ENCODE measurements at regions of chr2 and their contacts with region 1.

Region 1: GRCh38 chr2:43226558-43226954 is at the start of gene ZFP36L2:
- DNase-seq: peak; percentile 96 to 97
- H3K4me3 ChIP-seq: peak within 1 kb of the TSS; percentile 91 to 99 (median 97)
- H3K27ac ChIP-seq: peak within 1 kb of the TSS; percentile 99 to 100 (median 100)
- H3K4me1 ChIP-seq: peaks cover 22% of the 10 kb centered on the region in 2 donors
- H3K27me3 ChIP-seq: no peaks in the 10 kb centered on the region
- CTCF ChIP-seq: no peak
- POLR2A ChIP-seq: peak; percentile 83 to 99
- total RNA-seq, gene ZFP36L2: 146 to 287 (median 172) TPM

Region 2: GRCh38 chr2:42438685-42439084 is 787.9 kb before region 1 on chr2:
- intact Hi-C with region 1: no loop called
- DNase-seq: no peak
- H3K4me3 ChIP-seq: no peak overlapping the region
- H3K27ac ChIP-seq: no peak overlapping the region
- H3K4me1 ChIP-seq: no peaks in the 10 kb centered on the region
- H3K27me3 ChIP-seq: no peaks in the 10 kb centered on the region
- CTCF ChIP-seq: no peak
- POLR2A ChIP-seq: no peak

Region 3: GRCh38 chr2:42706836-42707235 is 519.7 kb before region 1 on chr2:
- intact Hi-C with region 1: no loop called
- DNase-seq: no peak
- H3K4me3 ChIP-seq: no peak overlapping the region
- H3K27ac ChIP-seq: no peak overlapping the region
- H3K4me1 ChIP-seq: no peaks in the 10 kb centered on the region
- H3K27me3 ChIP-seq: no peaks in the 10 kb centered on the region
- CTCF ChIP-seq: no peak
- POLR2A ChIP-seq: no peak

Region 4: DNA sequence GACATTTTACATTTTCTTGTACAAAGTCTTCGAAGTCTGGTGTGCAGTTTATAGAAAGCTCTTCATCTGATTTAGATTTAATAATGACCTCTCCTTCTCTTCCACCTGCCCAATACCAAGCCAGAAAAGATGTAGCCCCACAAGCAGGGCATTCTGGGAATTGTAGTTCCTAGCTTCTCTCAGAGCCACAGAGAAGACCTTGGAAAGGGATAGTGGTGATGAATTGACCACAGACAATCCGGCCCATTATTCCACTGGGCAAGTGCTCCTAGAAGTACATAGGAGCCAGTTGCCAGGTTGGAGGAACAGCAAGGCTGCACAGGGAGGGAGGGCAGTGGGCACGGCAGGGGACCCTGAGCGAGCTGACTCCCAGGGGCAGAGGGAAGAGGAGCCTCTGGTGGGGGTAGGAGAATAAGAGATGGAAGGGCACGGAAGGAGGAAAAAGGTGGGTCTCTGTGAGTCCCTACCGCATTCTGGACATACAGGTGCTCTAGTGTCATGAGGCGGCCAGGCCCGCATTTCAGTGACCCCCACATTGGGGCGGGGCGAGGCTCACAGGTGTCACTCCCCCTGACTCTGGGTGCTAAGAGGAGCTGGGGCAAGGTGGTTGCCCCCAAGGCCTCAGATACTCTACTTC is 281.7 kb before region 1 on chr2:
- intact Hi-C with region 1: loop called (anchors 5 kb)
- DNase-seq: no peak
- H3K4me3 ChIP-seq: no peak overlapping the region
- H3K27ac ChIP-seq: no peak overlapping the region
- H3K4me1 ChIP-seq: peaks cover 0 to 15% of the 10 kb centered on the region in 2 donors
- H3K27me3 ChIP-seq: no peaks in the 10 kb centered on the region
- CTCF ChIP-seq: no peak
- POLR2A ChIP-seq: no peak

Region 5: GRCh38 chr2:42974721-42975717 is 251.5 kb before region 1 on chr2:
- intact Hi-C with region 1: loop called (anchors 5 kb)
- DNase-seq: peak; percentile 78 to 79
- H3K4me3 ChIP-seq: peak overlapping the region in 1 of 3 donors; percentile 12
- H3K27ac ChIP-seq: peak overlapping the region in 2 of 3 donors; percentile 39 to 66
- H3K4me1 ChIP-seq: peaks cover 13 to 14% of the 10 kb centered on the region in 2 donors
- H3K27me3 ChIP-seq: no peaks in the 10 kb centered on the region
- CTCF ChIP-seq: peak; percentile 78 to 96 (median 91)
- POLR2A ChIP-seq: no peak

Region 6: DNA sequence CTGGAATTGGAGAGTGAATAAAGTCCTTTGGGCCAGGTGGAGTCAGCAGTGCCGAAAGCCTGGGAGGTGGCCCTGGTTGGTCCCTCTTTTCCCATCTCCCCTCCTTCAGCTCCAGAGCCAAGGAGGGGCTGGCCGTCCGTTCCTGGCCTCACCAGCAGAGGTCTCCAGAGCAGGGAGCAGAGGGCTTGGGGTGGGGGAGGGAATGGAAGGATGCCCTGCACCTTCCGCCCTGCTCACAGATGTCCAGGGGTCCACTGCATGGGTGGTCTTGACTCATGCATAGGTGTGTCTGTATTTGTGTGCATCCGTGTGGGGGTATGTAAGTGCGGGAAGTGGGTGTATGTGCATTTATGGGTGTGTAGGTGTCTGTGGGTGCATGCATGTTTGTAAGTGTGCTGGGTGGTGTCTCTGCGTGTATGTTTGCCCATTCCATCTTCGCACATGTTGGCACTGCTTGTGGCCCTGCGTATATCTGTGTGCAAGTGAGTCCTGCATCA is 202.0 kb before region 1 on chr2:
- intact Hi-C with region 1: loop called (anchors 5 kb)
- DNase-seq: peak; percentile 63 to 68
- H3K4me3 ChIP-seq: no peak overlapping the region
- H3K27ac ChIP-seq: no peak overlapping the region
- H3K4me1 ChIP-seq: peaks cover 0 to 10% of the 10 kb centered on the region in 2 donors
- H3K27me3 ChIP-seq: no peaks in the 10 kb centered on the region
- CTCF ChIP-seq: peak; percentile 63 to 91 (median 76)
- POLR2A ChIP-seq: no peak

Region 7: DNA sequence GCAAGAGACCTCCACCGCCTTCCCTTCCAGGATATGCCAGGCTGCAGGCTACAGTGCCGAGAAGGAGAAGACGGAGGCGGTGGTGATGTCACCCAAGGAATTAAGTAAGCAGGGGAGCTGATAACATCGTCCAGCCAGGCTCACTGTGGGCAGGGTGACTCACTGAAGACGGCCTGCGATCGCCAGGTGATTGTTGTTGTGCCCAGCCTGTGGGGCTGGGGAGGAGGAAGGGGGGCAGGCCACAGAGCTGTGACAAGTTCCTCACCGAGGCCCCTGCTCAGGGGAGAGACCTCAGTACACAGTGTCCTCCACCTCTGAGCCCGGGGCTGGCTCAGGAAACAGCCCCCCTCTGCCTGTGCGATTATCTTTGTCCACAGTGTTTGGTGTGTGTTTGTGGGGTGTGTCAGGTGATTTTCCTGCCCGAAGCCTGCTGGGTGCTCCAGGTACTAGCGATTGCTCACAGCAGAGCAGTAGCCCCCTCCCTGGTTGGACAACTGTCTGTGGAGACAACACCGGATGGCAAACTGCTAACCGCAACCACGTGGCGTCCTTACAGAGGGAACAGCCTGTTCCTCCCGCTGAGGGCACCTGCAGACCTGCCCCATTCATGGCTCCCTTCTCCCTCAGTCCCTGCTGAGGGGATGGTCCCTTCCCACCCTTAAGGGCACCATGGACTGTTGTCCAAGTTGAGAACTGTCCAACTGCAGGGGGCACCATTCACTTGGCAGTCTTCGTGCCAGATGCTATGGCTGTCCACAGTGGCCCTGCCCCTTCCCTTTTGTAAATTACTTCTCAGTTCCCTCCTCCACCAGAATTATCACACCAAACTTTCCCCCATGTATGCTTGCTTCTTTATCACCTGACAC is 95.3 kb before region 1 on chr2:
- intact Hi-C with region 1: loop called (anchors 5 kb)
- DNase-seq: peak; percentile 60 to 67
- H3K4me3 ChIP-seq: no peak overlapping the region
- H3K27ac ChIP-seq: peak overlapping the region; percentile 30 to 56 (median 50)
- H3K4me1 ChIP-seq: peaks cover 0 to 55% of the 10 kb centered on the region in 2 donors
- H3K27me3 ChIP-seq: no peaks in the 10 kb centered on the region
- CTCF ChIP-seq: peak in 4 of 6 experiments; percentile 36 to 61 (median 46)
- POLR2A ChIP-seq: no peak

Measured in thyroid gland (tissue), 4 donors.